CD14-positive monocyte (primary cell): ENCODE measurements at regions of chr11 and their contacts with region 1.

Region 1: DNA sequence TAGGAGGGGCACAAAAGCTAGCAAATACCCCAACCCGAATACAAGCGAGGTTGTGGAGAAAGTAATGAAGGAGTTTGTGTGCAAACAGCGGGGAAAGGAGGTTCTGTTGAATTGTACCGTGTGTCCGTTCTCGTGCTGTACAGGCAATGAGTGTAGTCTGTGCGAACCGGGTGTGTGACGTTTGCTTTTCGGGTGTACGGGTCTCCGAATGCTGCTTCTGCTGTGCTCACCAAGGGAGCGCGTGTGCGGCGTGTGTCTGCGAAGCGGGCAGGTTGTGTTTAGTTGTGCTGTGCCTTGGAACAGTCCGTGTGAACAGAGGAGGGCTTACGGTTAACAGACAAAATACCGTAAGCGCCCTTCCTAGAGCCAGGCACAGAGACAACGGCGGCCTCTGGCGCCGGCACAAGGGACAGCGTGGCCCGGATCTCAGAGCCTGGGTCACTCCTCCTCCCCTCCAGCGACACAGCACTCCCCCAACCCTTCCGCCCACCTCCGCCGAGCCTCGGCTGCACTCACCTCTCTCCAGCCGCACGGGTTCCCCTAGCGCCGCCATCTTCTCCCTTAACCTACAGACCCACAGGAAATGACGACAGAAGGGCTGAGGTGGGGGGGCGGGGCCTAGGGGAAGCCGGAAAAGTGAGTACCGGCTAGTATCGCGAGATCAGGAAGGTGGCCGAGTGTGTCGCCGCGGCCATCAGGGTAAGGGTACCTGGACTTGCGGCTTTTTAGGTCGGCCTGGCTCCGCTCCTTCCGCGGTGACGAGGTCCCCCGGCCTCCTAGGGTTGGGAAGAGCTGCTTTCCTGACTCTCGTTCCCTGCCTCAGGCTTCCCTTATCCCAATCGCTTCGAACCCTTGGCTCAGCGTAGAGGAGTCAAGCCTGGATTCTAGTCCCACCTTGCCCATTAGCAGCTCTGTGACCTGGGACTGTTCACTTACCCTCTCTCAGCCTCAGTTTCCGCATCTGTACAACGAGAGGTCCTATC is at the start of gene LIN7C:
- DNase-seq: peak; percentile 92 to 96 (median 95)
- H3K4me3 ChIP-seq: peak within 1 kb of the TSS; percentile 95 to 98 (median 96)
- H3K4me3 Mint-ChIP-seq: peak within 1 kb of the TSS; percentile 99 to 100
- H3K27ac ChIP-seq: peak within 1 kb of the TSS; percentile 90 to 96
- H3K27ac Mint-ChIP-seq: peak within 1 kb of the TSS; percentile 97 to 99 (median 99)
- H3K4me1 ChIP-seq: peaks cover 19 to 21% of the 10 kb centered on the region in 2 donors
- H3K4me1 Mint-ChIP-seq: peaks cover 28% of the 10 kb centered on the region
- H3K27me3 ChIP-seq: no peaks in the 10 kb centered on the region
- H3K27me3 Mint-ChIP-seq: peaks cover 0 to 1% (median 0%) of the 10 kb centered on the region in 3 donors
- CTCF ChIP-seq: no peak
- polyA plus RNA-seq, gene LIN7C: 7.3 to 24.0 (median 18.9) TPM

Region 2: DNA sequence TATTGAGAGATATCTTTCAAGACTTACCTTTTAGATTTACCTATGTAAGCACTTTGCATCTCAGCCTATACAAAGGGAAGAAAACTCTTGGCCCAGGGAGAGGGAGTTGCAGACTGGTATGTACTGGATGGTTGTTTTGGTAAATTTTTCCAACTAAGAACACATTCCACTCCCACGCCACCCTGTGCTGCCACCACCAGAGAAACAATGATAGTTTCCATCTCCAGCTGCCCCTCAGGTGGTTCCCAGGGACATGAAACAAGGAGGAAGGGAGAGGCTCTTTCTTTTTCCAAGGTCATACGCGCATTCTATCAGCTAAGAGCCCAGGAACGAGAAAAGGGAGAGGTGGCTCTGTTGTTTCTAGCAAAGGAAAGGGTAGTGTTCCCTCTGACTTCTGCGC is 177.9 kb before region 1 on chr11:
- intact Hi-C with region 1: no loop called
- DNase-seq: no peak
- H3K4me3 ChIP-seq: no peak overlapping the region
- H3K4me3 Mint-ChIP-seq: no peak overlapping the region
- H3K27ac ChIP-seq: no peak overlapping the region
- H3K27ac Mint-ChIP-seq: no peak overlapping the region
- H3K4me1 ChIP-seq: no peaks in the 10 kb centered on the region
- H3K4me1 Mint-ChIP-seq: no peaks in the 10 kb centered on the region
- H3K27me3 ChIP-seq: no peaks in the 10 kb centered on the region
- H3K27me3 Mint-ChIP-seq: peaks cover 0 to 2% (median 0%) of the 10 kb centered on the region in 3 donors
- CTCF ChIP-seq: no peak

Region 3: GRCh38 chr11:27392278-27393114 is 114.0 kb before region 1 on chr11:
- intact Hi-C with region 1: no loop called
- DNase-seq: no peak
- H3K4me3 ChIP-seq: no peak overlapping the region
- H3K4me3 Mint-ChIP-seq: no peak overlapping the region
- H3K27ac ChIP-seq: no peak overlapping the region
- H3K27ac Mint-ChIP-seq: no peak overlapping the region
- H3K4me1 ChIP-seq: no peaks in the 10 kb centered on the region
- H3K4me1 Mint-ChIP-seq: no peaks in the 10 kb centered on the region
- H3K27me3 ChIP-seq: no peaks in the 10 kb centered on the region
- H3K27me3 Mint-ChIP-seq: no peaks in the 10 kb centered on the region
- CTCF ChIP-seq: no peak

Region 4: DNA sequence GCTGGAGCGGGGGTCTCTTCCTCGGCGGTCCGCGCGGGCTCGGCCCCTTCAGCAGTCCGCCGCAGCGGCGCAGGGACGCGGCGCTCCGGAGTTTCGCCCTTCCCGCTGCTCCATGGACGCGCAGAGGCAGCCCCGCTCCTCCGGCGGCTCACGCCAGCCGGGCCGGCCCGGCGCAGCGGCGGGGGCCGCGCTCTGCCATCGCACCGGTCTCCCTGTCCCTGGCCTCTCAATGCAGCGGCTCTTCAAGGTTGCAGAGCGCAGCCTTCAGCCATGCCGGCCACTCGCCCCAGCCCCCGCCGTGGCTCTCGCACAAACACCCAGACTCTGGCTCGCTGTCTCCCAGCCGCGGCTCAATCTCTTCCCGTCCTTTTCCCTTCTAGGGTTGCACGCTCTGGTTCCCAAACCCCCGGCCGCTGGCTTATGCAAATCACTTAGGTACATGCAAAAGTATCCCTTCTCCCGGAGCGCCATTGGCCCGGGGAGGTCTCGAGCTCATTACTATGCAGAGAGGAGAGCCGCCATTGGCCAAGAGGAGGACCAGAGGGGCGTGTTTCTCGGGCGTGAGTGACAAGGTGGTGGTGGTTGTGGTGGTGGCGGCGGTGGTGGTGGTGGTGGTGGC is 34.0 kb before region 1 on chr11 and contains the start of gene LGR4:
- intact Hi-C with region 1: loop called in 1 of 2 experiments (anchors 5 kb)
- DNase-seq: peak; percentile 55 to 78 (median 76)
- H3K4me3 ChIP-seq: peak within 1 kb of the TSS; percentile 46 to 82 (median 51)
- H3K4me3 Mint-ChIP-seq: peak within 1 kb of the TSS; percentile 95 to 98
- H3K27ac ChIP-seq: peak within 1 kb of the TSS in 1 of 2 donors; percentile 7
- H3K27ac Mint-ChIP-seq: peak within 1 kb of the TSS in 6 of 7 donors; percentile 30 to 84 (median 68)
- H3K4me1 ChIP-seq: peaks cover 32 to 36% of the 10 kb centered on the region in 2 donors
- H3K4me1 Mint-ChIP-seq: peaks cover 46% of the 10 kb centered on the region
- H3K27me3 ChIP-seq: peaks cover 7 to 23% of the 10 kb centered on the region in 2 donors
- H3K27me3 Mint-ChIP-seq: peaks cover 28 to 33% (median 30%) of the 10 kb centered on the region in 3 donors
- CTCF ChIP-seq: no peak
- polyA plus RNA-seq, gene LGR4: 0.67 to 0.92 (median 0.72) TPM

Region 5: GRCh38 chr11:27571156-27571825 is 64.8 kb after region 1 on chr11:
- intact Hi-C with region 1: no loop called
- DNase-seq: no peak
- H3K4me3 ChIP-seq: no peak overlapping the region
- H3K4me3 Mint-ChIP-seq: no peak overlapping the region
- H3K27ac ChIP-seq: no peak overlapping the region
- H3K27ac Mint-ChIP-seq: no peak overlapping the region
- H3K4me1 ChIP-seq: no peaks in the 10 kb centered on the region
- H3K4me1 Mint-ChIP-seq: no peaks in the 10 kb centered on the region
- H3K27me3 ChIP-seq: no peaks in the 10 kb centered on the region
- H3K27me3 Mint-ChIP-seq: no peaks in the 10 kb centered on the region
- CTCF ChIP-seq: no peak

Region 6: DNA sequence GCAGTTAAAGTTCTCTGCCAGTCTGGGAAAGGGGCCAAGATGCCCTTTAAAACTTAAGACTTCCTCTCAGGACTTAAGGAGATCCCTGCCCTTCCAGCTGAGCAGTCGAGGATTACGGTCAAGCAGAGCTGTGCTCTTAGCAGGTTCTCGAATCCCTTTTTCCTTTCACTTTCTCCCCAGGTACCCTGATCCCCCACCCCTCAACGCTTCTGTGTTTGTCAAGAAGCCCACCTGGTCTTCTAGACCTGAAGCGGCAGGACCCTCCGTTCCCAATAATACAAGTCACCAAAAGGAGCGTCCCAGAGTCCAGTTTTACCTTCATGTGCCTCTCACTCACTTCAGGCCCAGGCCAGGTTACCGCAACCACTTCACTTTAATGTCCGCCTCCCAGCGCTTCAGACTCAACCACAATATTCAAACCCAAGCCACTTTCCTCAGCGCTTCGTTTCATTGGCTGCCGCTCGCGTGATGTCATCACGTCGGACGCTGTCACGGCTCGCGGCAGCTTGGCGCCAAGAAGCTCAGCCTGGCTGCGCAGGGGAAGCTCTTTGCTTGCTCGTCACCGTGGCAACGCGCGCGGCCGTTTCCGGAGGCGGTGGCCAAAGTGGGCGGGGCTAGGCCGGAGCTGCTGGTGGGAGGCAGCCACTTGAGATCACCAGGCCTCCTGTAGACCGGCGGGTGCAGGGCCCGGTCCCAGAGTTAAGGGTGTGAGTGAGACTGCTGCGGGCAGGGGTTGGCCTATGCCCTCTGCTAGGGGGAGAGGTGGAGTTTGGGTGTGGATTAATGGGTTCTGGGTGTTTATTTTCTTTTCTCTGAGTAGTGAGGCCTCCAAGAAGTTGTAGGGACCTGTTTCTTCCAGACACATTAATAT is 601.5 kb after region 1 on chr11 and contains the starts of genes KIF18A and METTL15:
- intact Hi-C with region 1: loop called (anchors 10 kb)
- DNase-seq: peak; percentile 99
- H3K4me3 ChIP-seq: peak within 1 kb of the TSS; percentile 77 to 92 (median 92)
- H3K4me3 Mint-ChIP-seq: peak within 1 kb of the TSS; percentile 97 to 98
- H3K27ac ChIP-seq: peak within 1 kb of the TSS; percentile 68 to 97
- H3K27ac Mint-ChIP-seq: peak within 1 kb of the TSS; percentile 96 to 100 (median 100)
- H3K4me1 ChIP-seq: peaks cover 21 to 29% of the 10 kb centered on the region in 2 donors
- H3K4me1 Mint-ChIP-seq: peaks cover 42% of the 10 kb centered on the region
- H3K27me3 ChIP-seq: no peaks in the 10 kb centered on the region
- H3K27me3 Mint-ChIP-seq: no peaks in the 10 kb centered on the region
- CTCF ChIP-seq: no peak
- polyA plus RNA-seq, gene KIF18A: 0.13 to 0.73 TPM in 2 of 3 donors, not detected in the other
- polyA plus RNA-seq, gene METTL15: 2.3 to 2.9 (median 2.6) TPM